ENCODE measurements at regions of chr9 and their contacts with region 1.

Region 1: DNA sequence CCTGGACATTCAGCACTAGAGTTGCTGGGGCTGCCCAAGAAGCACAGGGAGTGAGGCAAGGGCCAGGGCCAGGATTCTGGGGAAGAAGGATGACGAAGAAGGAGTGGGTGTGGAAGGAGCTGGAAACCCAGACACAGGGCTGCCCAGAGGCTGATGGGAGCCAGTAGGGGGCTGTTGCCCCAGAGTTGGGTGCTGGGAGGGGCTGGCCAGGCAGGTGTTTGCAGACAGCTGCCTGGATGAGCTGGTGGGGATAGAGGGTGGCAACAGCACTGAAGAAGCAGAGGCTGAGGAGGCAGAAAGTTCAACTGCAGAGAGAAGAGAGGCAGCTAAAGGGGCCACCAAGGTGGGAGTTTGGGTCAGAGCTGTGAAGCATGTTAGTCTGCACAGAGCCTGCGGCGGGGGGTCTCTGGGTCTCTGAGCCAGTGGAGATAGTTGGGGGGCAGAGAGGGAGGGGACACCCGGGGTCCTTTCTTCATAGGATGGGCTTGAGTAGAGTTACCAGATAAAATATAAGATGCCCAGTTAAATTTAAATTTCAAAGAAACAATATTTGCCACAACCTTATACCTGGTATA is 2.5 kb upstream of the AQP7 start:
- DNase-seq: no peak
- H3K4me3 ChIP-seq: no peak overlapping the region
- CTCF ChIP-seq: no peak

Region 2: GRCh38 chr9:33311953-33312352 is 92.9 kb before region 1 on chr9:
- in situ Hi-C with region 1: no loop called
- DNase-seq: no peak
- H3K4me3 ChIP-seq: no peak overlapping the region
- CTCF ChIP-seq: no peak

Region 3: DNA sequence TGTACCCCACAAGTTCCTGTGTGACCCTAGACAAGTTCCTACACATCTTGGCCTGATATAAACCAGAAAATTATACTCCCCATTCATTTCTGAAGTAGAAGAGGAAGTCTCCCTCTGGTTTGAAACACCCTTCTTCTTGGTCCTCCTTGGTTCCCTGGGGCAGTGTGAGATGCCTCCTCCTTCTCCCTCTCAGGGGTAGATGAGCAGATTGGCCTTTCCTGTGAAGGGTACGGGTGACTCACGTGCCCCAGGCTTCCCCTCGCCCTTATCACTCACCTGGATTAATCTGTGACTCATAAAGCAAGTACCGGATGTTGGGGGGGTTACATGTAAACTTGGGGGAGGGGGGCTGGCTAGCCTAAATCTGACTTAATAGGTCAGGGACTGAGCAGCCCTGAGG is 53.6 kb after region 1 on chr9:
- in situ Hi-C with region 1: loop called (anchors 5 kb)
- DNase-seq: peak; percentile 2
- H3K4me3 ChIP-seq: no peak overlapping the region
- CTCF ChIP-seq: no peak

Measured in astrocyte of the cerebellum (primary cell).